Activated naive CD4-positive, alpha-beta T cell treated with anti-CD3 and anti-CD28 coated beads for 36 hours (primary cell): ENCODE measurements at regions of chr3 and their contacts with region 1.

Region 1: GRCh38 chr3:10983219-10983916 is 9.2 kb upstream of the SLC6A1 start:
- DNase-seq: peak; percentile 29
- H3K4me3 Mint-ChIP-seq: no peak overlapping the region
- H3K27ac Mint-ChIP-seq: no peak overlapping the region
- H3K4me1 Mint-ChIP-seq: no peaks in the 10 kb centered on the region
- H3K27me3 Mint-ChIP-seq: peaks cover 16% of the 10 kb centered on the region

Region 2: GRCh38 chr3:10907262-10907661 is 76.1 kb before region 1 on chr3:
- CTCF ChIA-PET with region 1: no interaction called
- intact Hi-C with region 1: no loop called
- DNase-seq: no peak
- H3K4me3 Mint-ChIP-seq: no peak overlapping the region
- H3K27ac Mint-ChIP-seq: no peak overlapping the region
- H3K4me1 Mint-ChIP-seq: no peaks in the 10 kb centered on the region
- H3K27me3 Mint-ChIP-seq: peaks cover 4% of the 10 kb centered on the region

Region 3: GRCh38 chr3:10945683-10946287 is 37.6 kb before region 1 on chr3:
- CTCF ChIA-PET with region 1: interaction called, 5 read pairs
- intact Hi-C with region 1: loop called (anchors 5 kb)
- DNase-seq: peak; percentile 70
- H3K4me3 Mint-ChIP-seq: no peak overlapping the region
- H3K27ac Mint-ChIP-seq: no peak overlapping the region
- H3K4me1 Mint-ChIP-seq: no peaks in the 10 kb centered on the region
- H3K27me3 Mint-ChIP-seq: peaks cover 15% of the 10 kb centered on the region

Region 4: GRCh38 chr3:11350374-11350773 is 367.0 kb after region 1 on chr3:
- CTCF ChIA-PET with region 1: no interaction called
- intact Hi-C with region 1: no loop called
- DNase-seq: no peak
- H3K4me3 Mint-ChIP-seq: no peak overlapping the region
- H3K27ac Mint-ChIP-seq: no peak overlapping the region
- H3K4me1 Mint-ChIP-seq: no peaks in the 10 kb centered on the region
- H3K27me3 Mint-ChIP-seq: no peaks in the 10 kb centered on the region